ENCODE measurements at regions of chr3 and their contacts with region 1.

Region 1: GRCh38 chr3:9649791-9650521 is 651 bp downstream of the MTMR14 start:
- DNase-seq: no peak
- H3K4me3 Mint-ChIP-seq: peak overlapping the region; percentile 93
- H3K27ac Mint-ChIP-seq: peak overlapping the region; percentile 82
- H3K4me1 Mint-ChIP-seq: peaks cover 13% of the 10 kb centered on the region
- H3K27me3 Mint-ChIP-seq: no peaks in the 10 kb centered on the region

Region 2: DNA sequence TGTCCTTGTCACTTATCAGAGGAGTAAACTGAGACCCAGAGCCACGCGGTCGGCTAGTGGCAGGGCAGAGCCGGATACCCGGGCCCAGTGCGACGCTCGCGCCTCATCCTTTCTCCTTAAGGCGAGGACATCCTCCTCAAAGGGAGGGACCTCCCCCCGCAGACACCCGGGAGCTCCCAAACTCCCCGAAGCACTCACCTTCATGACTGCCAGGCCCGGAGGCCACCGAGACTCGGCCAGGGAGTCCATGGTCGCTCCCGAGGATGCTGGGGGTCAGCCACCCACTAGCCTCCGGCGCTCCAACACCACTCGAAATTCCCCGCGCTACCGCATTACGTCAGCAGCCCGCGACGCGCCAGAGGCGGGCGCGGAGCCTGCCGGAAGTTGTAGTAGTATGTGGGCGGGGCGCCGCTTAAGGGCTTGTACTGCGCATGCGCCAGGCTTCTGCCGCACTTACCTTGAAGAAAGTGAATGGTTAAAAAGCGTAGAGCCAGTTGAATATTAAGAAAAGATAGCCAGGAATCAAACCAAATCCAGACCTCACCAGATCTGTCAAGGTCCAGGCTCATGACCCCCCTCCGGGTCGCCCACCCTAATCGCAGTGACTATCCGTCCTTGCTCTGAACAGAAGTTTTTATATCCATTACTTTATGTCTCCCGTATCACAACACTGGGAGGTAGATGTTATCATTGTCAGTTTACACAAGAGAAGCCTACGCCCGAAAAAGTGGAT is 686.7 kb before region 1 on chr3 and contains the start of gene RAD18:
- intact Hi-C with region 1: loop called (anchors 5 kb)
- DNase-seq: peak; percentile 91
- H3K4me3 Mint-ChIP-seq: peak within 1 kb of the TSS; percentile 98
- H3K27ac Mint-ChIP-seq: peak within 1 kb of the TSS; percentile 97
- H3K4me1 Mint-ChIP-seq: peaks cover 62% of the 10 kb centered on the region
- H3K27me3 Mint-ChIP-seq: peaks cover 7% of the 10 kb centered on the region
- total RNA-seq, gene RAD18: 52.8 and 54.2 TPM in 2 replicates

Region 3: GRCh38 chr3:9352917-9353752 is 296.8 kb before region 1 on chr3:
- intact Hi-C with region 1: loop called (anchors 2 kb)
- DNase-seq: peak; percentile 39
- H3K4me3 Mint-ChIP-seq: no peak overlapping the region
- H3K27ac Mint-ChIP-seq: no peak overlapping the region
- H3K4me1 Mint-ChIP-seq: peaks cover 20% of the 10 kb centered on the region
- H3K27me3 Mint-ChIP-seq: no peaks in the 10 kb centered on the region

Region 4: DNA sequence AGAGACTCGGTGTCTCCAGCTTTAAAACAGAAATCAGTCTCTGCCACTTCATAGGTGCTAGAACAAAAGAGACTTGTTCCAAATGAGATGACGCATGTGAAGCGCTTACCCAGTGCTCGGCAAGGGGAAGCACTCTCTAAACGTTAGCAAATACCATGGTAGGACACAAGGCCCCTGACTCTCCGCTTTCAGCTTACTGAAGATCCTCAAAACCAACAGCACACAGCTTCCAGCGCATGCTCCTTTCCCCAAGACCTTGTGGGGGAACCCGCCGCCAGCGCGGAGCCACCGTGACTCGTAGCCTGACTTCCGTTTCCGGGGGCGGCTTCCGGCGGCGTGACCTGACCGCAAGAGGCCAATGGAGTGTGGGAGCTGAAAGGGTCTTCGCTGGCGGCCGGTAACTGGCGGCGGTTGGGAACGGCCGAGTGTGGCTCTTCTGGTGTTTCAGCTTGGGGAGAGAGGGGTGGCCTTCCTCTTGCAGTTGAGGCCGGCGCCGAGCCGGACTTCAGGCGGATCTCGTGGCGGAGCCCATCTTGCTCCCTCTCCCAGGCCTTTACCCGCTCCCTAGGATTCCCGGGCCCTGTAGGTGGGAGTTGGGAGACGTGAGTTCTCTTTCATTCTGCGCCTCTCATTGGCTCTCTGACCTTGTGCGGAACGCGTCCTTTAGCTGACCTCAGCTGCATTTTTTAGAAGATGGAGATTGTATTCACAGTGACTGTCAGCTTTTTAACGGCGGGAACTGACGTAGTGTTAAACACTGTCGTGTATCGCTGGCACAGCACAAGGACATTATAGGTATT is 287.0 kb before region 1 on chr3 and contains the start of gene THUMPD3:
- intact Hi-C with region 1: loop called (anchors 2 kb)
- DNase-seq: peak; percentile 90
- H3K4me3 Mint-ChIP-seq: peak within 1 kb of the TSS; percentile 96
- H3K27ac Mint-ChIP-seq: peak within 1 kb of the TSS; percentile 98
- H3K4me1 Mint-ChIP-seq: peaks cover 6% of the 10 kb centered on the region
- H3K27me3 Mint-ChIP-seq: peaks cover 2% of the 10 kb centered on the region
- total RNA-seq, gene THUMPD3: 61.4 and 62.4 TPM in 2 replicates

Region 5: GRCh38 chr3:9503283-9503682 is 146.7 kb before region 1 on chr3:
- intact Hi-C with region 1: loop called (anchors 2 kb)
- DNase-seq: peak; percentile 57
- H3K4me3 Mint-ChIP-seq: no peak overlapping the region
- H3K27ac Mint-ChIP-seq: no peak overlapping the region
- H3K4me1 Mint-ChIP-seq: no peaks in the 10 kb centered on the region
- H3K27me3 Mint-ChIP-seq: peaks cover 26% of the 10 kb centered on the region

Region 6: DNA sequence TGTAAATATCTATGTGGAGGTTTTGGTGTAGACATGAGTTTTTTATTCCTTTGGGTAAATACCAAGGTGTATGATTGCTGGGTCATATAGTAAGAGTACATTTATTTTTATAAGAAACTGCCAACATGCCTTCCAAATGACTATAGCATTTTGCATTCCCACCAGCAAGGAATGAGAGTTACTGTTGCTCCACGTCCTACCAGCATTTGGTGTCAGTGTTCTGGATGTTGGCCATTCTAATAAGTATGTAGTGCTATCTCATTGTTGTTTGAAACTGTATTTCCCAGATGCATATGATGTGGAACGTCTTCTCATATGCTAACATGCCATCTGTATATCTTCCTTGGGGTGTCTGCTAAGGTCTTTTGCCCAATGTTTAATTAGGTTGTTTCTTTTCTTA is 135.0 kb before region 1 on chr3:
- intact Hi-C with region 1: no loop called
- DNase-seq: no peak
- H3K4me3 Mint-ChIP-seq: no peak overlapping the region
- H3K27ac Mint-ChIP-seq: no peak overlapping the region
- H3K4me1 Mint-ChIP-seq: no peaks in the 10 kb centered on the region
- H3K27me3 Mint-ChIP-seq: peaks cover 4% of the 10 kb centered on the region

Region 7: GRCh38 chr3:9638155-9638554 is 11.8 kb before region 1 on chr3:
- intact Hi-C with region 1: no loop called
- DNase-seq: no peak
- H3K4me3 Mint-ChIP-seq: no peak overlapping the region
- H3K27ac Mint-ChIP-seq: no peak overlapping the region
- H3K4me1 Mint-ChIP-seq: no peaks in the 10 kb centered on the region
- H3K27me3 Mint-ChIP-seq: peaks cover 2% of the 10 kb centered on the region

Region 8: GRCh38 chr3:9690451-9691450 is 40.8 kb after region 1 on chr3:
- intact Hi-C with region 1: no loop called
- DNase-seq: no peak
- H3K4me3 Mint-ChIP-seq: no peak overlapping the region
- H3K27ac Mint-ChIP-seq: peak overlapping the region; percentile 23
- H3K4me1 Mint-ChIP-seq: no peaks in the 10 kb centered on the region
- H3K27me3 Mint-ChIP-seq: no peaks in the 10 kb centered on the region

Region 9: GRCh38 chr3:9749645-9750555 is 99.9 kb after region 1 on chr3 and contains the start of gene OGG1:
- intact Hi-C with region 1: loop called (anchors 1 kb)
- DNase-seq: peak; percentile 96
- H3K4me3 Mint-ChIP-seq: peak within 1 kb of the TSS; percentile 96
- H3K27ac Mint-ChIP-seq: peak within 1 kb of the TSS; percentile 95
- H3K4me1 Mint-ChIP-seq: peaks cover 61% of the 10 kb centered on the region
- H3K27me3 Mint-ChIP-seq: no peaks in the 10 kb centered on the region
- total RNA-seq, gene OGG1: 40.2 and 40.6 TPM in 2 replicates